Motor neuron (in vitro differentiated cells): ENCODE measurements at regions of chr1 and their contacts with region 1.

Region 1: GRCh38 chr1:234599617-234600417 is 10.2 kb downstream of the IRF2BP2 start:
- ATAC-seq: peak; percentile 67 to 88 (median 84)
- H3K4me3 ChIP-seq: peak overlapping the region; percentile 31 to 40 (median 38)
- H3K27ac ChIP-seq: peak overlapping the region; percentile 47 to 72
- H3K4me1 ChIP-seq: peaks cover 31 to 43% of the 10 kb centered on the region in 2 donors

Region 2: GRCh38 chr1:234499119-234499942 is 100.5 kb before region 1 on chr1:
- in situ Hi-C with region 1: loop called in 6 of 9 experiments (anchors 10 kb)
- ATAC-seq: peak; percentile 56 to 98 (median 96)
- H3K4me3 ChIP-seq: peak overlapping the region in 2 of 5 donors; percentile 1 to 3
- H3K27ac ChIP-seq: peak overlapping the region in 1 of 2 donors; percentile 67
- H3K4me1 ChIP-seq: peaks cover 15 to 32% of the 10 kb centered on the region in 2 donors

Region 3: DNA sequence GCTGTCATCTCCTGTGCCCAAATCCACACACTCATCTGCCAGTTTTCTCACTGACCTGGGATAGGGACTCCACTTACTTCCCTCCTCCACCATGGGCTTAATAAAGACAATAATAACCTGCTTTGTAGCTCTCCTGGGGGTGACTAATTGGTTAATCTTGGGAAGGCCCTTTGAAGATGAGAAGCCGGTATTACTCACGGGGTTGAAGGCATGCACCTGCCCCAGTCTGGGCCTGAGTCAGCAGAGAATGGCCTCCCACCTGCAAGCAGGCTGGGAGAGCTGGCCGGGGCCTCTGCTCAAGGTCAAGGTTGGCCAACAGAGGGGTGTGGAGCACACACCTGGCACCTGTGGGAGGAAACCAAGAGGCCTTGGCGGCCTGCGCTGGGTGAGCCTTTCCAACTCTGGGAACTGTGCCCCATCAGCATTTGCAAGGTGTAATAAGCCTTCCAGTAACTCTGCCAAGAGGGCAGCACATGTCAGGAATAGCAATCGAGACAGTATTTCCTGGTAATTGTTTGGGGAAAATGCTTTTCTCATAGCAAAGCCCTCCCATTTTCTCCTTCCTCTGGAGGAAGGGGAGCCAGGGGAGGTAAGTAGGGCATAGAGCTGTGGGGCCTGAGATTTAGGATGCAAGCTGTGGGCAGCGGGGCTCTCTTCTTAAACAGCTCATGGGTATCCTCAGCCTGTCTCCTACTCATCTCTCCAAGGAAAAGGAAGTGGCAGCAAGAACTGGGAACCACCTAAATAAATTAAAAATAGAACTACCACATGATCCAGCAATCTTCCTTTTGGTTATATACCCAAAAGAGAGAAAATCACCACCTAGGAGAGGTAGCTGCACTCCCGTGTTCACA is 479.9 kb after region 1 on chr1:
- in situ Hi-C with region 1: loop called in 5 of 9 experiments (anchors 10 to 25 kb)
- ATAC-seq: no peak
- H3K4me3 ChIP-seq: no peak overlapping the region
- H3K27ac ChIP-seq: no peak overlapping the region
- H3K4me1 ChIP-seq: peaks cover 29% of the 10 kb centered on the region in 2 donors